Ovary (tissue), 10 donors: ENCODE measurements at regions of chr20 and their contacts with region 1.

Region 1: DNA sequence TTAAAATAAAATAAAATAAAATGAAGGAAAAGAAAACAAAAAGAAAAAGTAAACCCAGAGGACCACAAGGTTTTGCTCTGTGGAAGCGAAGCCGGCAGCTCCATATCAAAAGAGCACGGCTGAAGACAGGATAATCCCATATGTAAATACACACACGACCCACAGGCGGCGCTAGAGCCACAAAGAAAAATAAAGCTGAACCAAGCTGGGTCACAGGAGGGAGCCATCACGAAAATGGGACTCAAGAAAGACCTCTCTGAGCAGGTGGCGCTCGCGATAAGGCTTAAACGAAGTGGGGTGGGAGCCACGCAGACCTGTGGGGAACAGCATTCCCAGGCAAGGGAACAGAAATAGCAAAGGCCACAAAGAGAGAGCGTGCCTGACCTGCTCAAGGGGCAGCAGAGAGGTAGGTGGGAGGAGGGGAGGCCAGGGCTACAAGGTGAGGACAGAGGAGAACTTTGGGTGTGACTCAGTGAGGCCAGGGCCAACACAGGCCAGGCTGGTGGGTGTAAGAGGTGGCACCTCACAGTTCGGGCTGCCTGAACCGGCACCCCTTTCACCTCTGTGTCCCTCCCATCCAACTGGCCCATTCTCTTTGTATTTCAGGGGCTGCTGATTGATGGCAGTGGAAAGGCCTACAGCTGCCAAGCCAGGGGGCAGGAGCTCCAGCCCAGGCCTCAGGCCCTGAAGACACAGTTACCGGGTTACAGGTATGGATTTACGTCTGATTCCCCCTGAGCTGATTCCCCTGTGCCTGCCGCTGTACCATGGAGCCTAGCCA is 26.0 kb downstream of the PTGIS start:
- DNase-seq: peak; percentile 71 to 84 (median 78)
- H3K4me3 ChIP-seq: no peak overlapping the region
- H3K27ac ChIP-seq: no peak overlapping the region
- H3K4me1 ChIP-seq: no peaks in the 10 kb centered on the region
- H3K27me3 ChIP-seq: no peaks in the 10 kb centered on the region
- CTCF ChIP-seq: peak; percentile 56 to 97 (median 93)
- EP300 ChIP-seq: no peak
- POLR2A ChIP-seq: peak; percentile 29

Region 2: DNA sequence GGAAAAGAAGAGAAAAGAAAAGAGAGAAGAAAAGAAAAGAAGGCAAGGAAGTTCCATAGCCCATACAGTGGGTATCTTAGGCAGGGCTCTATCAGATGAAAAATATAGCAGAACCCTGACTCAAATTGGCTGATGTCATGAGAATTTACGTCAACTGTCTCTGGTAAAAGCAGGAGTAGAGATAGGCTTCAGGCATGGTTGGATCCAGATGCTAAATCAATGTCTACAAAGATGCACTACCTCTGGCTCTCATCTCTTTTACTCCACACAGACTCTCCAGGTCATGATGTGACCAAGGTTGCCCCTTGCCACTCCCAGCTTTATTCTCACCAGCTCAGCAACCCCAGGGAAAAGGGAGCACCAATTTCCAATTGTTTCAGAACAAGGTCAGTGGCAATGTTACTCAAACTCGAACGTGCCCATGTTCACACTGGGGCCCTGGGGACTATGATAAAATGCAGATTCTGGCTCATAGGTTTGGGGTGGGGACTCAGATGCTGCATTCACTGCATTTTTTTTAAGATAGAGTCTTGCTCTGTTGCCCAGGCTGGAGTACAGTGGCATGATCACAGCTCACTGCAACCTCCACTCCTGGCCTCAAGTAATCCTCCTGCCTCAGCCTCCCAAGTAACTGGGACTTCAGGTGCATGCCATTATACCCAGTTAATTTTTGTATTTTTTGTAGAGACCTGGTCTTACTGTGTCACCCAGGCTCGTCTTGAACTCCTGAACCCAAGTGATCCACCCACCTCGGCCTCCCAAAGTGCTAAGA is 59.4 kb after region 1 on chr20:
- intact Hi-C with region 1: loop called in 2 of 4 experiments (anchors 2 kb)
- DNase-seq: no peak
- H3K4me3 ChIP-seq: no peak overlapping the region
- H3K27ac ChIP-seq: no peak overlapping the region
- H3K4me1 ChIP-seq: peaks cover 5% of the 10 kb centered on the region
- H3K27me3 ChIP-seq: no peaks in the 10 kb centered on the region
- CTCF ChIP-seq: no peak
- EP300 ChIP-seq: no peak
- POLR2A ChIP-seq: no peak

Region 3: DNA sequence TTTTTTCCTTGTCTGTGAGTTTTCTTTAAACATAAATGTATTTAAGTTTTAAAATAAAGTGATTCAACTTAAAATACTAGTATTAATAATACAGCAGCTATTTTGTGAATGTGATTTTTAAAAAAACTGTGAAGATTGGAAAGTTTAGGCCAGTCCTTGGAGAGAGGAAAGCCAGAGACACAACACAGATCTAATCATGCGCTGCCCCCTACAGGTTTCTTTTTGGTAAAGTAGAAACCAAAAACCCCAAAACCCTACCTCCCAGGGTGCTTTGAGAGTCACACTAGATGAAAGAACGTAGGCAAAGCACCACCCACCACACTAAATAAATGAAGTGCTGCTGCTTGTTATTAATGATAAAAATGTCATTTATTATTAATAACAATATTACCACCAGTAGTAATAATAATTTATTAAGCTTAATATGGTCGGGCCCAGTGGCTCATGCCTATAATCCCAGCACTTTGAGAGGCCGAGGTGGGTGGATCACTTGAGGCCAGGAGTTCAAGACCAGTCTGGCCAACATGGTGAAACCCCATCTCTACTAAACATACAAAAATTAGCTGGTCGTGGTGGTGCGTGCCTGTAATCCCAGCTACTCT is 304.4 kb after region 1 on chr20:
- intact Hi-C with region 1: loop called in 2 of 4 experiments (anchors 10 kb)
- DNase-seq: peak in 3 of 5 donors; percentile 43 to 62 (median 43)
- H3K4me3 ChIP-seq: no peak overlapping the region
- H3K27ac ChIP-seq: no peak overlapping the region
- H3K4me1 ChIP-seq: no peaks in the 10 kb centered on the region
- H3K27me3 ChIP-seq: no peaks in the 10 kb centered on the region
- CTCF ChIP-seq: peak; percentile 14 to 60 (median 58)
- EP300 ChIP-seq: no peak
- POLR2A ChIP-seq: no peak